PC-9 (cell line): ENCODE measurements at regions of chr7 and their contacts with region 1.

Region 1: DNA sequence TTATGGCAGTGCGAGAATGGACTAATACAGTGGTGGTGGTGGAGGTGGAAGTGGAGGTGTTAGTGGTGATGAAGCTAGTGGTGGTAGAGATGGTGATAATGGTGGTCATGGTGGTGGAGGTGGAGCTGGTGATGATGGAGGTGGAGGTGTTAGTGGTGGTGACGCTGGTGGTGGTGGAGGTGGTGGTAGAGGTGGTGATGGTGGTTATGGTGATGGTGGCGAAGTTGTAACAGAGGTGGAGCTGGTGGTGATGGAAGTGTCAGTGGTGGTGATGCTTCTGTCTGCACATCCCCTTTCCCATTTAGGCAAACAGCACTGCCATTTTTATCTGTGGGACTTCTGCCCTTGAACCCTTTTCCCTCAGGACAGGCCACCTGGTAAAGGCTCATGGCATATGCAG is 7.4 kb upstream of the PTPRN2 start:
- DNase-seq: peak in 1 of 2 experiments; percentile 49
- H3K4me3 ChIP-seq: no peak overlapping the region
- H3K27ac ChIP-seq: no peak overlapping the region
- H3K4me1 ChIP-seq: no peaks in the 10 kb centered on the region
- H3K27me3 ChIP-seq: peaks cover 32% of the 10 kb centered on the region
- CTCF ChIP-seq: no peak

Region 2: DNA sequence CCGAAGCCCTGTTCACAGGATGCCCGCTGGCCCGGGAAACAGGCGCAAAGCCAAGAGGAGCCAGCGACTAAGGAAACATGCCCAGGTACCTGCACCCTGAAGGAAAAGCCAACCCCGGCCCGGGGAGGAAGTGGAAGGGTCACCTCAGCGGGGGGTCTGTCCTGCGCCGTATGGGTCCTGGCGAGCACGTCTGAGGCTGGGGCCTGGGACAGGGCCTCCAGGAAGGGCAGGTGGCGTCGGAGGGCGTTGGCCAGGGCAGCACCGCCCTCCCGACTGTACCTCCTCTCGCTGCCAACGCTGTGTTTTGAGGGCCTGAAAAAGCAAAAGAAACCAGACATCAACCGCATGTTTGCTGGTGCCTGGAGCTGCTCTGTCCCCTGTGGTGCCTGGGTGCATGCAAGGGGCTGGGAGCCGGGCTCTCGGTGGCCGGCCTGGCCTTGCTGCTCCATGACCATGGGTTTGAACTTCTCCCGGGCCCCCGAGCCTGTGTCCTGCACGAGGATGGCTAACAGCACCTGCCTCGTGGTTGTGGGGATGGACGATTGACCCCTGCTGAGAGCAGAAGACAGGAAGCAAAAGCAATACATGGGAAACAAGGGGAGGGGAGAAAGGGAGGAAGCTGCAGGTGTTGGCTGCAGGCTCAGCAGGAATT is 402.8 kb before region 1 on chr7:
- CTCF ChIA-PET with region 1: no interaction called
- POLR2A ChIA-PET with region 1: no interaction called
- intact Hi-C with region 1: no loop called
- DNase-seq: no peak
- H3K4me3 ChIP-seq: no peak overlapping the region
- H3K27ac ChIP-seq: no peak overlapping the region
- H3K4me1 ChIP-seq: no peaks in the 10 kb centered on the region
- H3K27me3 ChIP-seq: peaks cover 91% of the 10 kb centered on the region
- CTCF ChIP-seq: no peak

Region 3: GRCh38 chr7:158527915-158528502 is 67.1 kb before region 1 on chr7:
- CTCF ChIA-PET with region 1: no interaction called
- POLR2A ChIA-PET with region 1: interaction called, 31 read pairs
- intact Hi-C with region 1: no loop called
- DNase-seq: no peak
- H3K4me3 ChIP-seq: no peak overlapping the region
- H3K27ac ChIP-seq: no peak overlapping the region
- H3K4me1 ChIP-seq: no peaks in the 10 kb centered on the region
- H3K27me3 ChIP-seq: peaks cover 87% of the 10 kb centered on the region
- CTCF ChIP-seq: no peak

Region 4: DNA sequence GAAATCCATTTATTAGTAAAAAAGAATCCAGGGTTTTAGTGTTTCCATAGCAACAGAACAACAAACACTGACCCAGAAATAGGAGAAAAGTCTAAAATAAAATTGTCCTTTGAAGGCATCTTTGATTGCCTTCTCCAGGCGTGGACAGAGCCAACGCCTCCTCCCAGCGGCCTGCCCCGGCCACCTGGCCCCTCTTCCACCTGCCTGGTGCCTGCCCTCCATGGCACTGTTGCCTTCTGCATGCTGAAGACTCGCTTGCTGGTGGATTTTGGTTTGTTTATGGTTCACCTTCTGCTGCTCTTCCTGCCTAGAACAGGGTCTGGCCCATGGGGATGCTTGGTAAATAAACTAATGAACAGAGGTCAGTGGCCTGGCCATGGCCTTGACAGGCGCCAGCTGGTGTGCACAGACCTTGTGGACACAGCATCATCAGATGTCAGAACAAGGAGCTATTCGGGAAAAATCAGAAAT is 368.7 kb after region 1 on chr7:
- CTCF ChIA-PET with region 1: no interaction called
- POLR2A ChIA-PET with region 1: interaction called, 22 read pairs
- intact Hi-C with region 1: no loop called
- DNase-seq: no peak
- H3K4me3 ChIP-seq: no peak overlapping the region
- H3K27ac ChIP-seq: no peak overlapping the region
- H3K4me1 ChIP-seq: no peaks in the 10 kb centered on the region
- H3K27me3 ChIP-seq: peaks cover 77% of the 10 kb centered on the region
- CTCF ChIP-seq: no peak